ENCODE measurements at regions of chr3 and their contacts with region 1.

Region 1: GRCh38 chr3:52339612-52340011 is 23.5 kb downstream of the DNAH1 start:
- DNase-seq: peak; percentile 22 to 68
- H3K4me3 ChIP-seq: no peak overlapping the region
- H3K27ac ChIP-seq: no peak overlapping the region
- H3K4me1 ChIP-seq: no peaks in the 10 kb centered on the region
- H3K27me3 ChIP-seq: no peaks in the 10 kb centered on the region
- CTCF ChIP-seq: peak; percentile 78

Region 2: DNA sequence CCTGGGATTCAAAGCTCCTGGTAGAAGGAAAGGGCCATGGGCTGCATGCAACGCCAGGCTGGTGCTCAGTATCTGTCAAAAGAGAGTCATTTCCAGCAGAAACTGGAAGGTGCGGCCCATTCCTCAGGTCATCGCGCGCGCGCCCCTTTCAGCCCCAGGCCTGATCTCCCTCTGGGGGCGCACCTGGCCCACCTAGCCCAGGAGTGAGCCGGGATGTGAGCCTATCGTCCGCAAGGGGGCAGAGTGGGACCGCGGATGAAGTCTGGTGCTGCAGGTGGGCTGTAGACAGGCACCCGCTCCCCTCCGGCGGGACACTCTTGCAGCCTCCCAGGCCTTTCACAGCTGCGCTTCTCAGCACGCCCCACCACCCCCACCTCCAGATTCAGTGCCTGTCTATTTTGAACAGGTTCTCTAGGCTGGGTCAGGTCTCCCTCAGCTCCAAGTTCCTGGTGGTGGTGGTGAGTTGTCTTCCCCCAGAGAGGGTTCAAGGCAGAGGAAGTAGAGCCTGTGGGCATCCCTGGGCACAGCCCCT is 338.1 kb before region 1 on chr3:
- CTCF ChIA-PET with region 1: interaction called, 5 read pairs
- POLR2A ChIA-PET with region 1: no interaction called
- intact Hi-C with region 1: loop called (anchors 1 kb)
- DNase-seq: peak in 1 of 2 experiments; percentile 73
- H3K4me3 ChIP-seq: no peak overlapping the region
- H3K27ac ChIP-seq: no peak overlapping the region
- H3K4me1 ChIP-seq: peaks cover 13% of the 10 kb centered on the region
- H3K27me3 ChIP-seq: no peaks in the 10 kb centered on the region
- CTCF ChIP-seq: peak; percentile 92

Region 3: DNA sequence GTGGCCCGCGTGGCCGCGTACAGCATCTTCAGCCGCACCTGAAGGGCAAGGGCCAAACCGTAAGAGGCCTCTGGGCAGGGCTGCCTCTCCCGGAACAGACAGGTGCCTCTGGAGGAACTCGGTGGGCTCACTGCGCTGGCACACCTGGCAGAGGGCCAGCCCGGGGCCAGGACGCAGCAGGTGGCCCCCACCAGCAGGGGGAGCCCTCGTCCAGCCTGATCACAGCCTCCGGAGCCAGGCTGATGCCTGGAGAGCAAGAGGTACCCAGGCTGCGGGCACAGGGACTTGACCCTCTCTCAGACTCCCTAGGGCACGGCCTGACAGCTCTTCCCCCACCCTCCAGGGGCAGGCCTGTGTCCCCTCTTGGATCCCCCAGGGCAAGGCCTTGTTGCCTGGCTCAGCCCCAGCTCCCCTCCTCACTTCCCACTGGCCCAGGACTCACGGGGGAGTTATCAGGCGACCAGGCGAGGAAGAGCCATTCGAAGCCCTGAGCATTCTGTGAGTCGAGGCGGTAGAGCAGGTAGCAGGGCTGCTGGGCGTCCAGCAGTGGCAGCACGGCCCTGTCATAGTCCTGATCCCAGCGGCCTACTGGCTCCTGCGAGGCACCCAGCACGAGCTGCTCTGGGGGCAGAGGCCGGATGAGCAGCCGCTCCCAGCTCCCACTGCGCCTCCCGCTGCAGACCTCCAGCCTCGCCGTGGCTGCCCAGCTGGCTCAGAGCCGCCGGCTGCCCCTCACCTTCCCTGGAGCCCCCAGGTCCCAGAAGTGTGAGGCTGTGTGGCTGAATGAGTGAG is 107.9 kb before region 1 on chr3:
- CTCF ChIA-PET with region 1: no interaction called
- POLR2A ChIA-PET with region 1: no interaction called
- intact Hi-C with region 1: loop called (anchors 1 kb)
- DNase-seq: peak in 1 of 2 experiments; percentile 79
- H3K4me3 ChIP-seq: no peak overlapping the region
- H3K27ac ChIP-seq: no peak overlapping the region
- H3K4me1 ChIP-seq: peaks cover 15% of the 10 kb centered on the region
- H3K27me3 ChIP-seq: no peaks in the 10 kb centered on the region
- CTCF ChIP-seq: peak; percentile 86

Region 4: DNA sequence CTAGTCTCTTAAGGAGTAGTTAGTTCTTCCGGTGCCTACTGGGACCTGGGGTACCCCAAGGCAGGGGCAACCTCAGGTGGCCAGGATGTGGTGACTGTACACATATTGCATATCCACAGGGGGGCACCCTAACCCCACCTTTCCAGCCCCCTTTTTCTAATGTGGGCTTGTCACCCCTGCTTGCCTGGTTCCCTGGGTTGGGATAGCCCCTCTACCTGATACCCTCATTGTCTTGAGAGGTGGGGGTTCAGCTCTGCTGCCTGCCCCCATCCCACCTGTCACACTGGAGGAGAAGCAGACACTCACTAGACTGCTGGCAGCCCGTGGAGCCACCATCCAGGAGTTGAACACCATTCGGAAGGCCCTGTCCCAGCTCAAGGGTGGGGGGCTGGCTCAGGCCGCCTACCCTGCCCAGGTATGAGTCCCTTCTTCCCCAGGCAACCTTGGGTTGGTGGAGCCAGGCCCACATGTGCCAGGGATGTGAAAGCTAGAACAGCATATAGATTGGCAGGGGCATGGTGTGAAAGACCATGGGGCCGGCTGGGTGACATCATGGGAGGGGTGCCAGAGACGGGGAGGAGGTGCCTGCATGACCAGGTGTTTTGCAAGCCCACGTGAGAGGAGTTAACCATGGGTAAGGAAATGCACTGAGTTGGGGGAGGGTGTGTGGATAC is 48.0 kb before region 1 on chr3:
- CTCF ChIA-PET with region 1: interaction called, 17 read pairs
- POLR2A ChIA-PET with region 1: no interaction called
- intact Hi-C with region 1: loop called (anchors 1 kb)
- DNase-seq: peak in 1 of 2 experiments; percentile 21
- H3K4me3 ChIP-seq: no peak overlapping the region
- H3K27ac ChIP-seq: no peak overlapping the region
- H3K4me1 ChIP-seq: peaks cover 7% of the 10 kb centered on the region; the same call in 1 of the 2 replicates
- H3K27me3 ChIP-seq: no peaks in the 10 kb centered on the region
- CTCF ChIP-seq: peak; percentile 64

Region 5: DNA sequence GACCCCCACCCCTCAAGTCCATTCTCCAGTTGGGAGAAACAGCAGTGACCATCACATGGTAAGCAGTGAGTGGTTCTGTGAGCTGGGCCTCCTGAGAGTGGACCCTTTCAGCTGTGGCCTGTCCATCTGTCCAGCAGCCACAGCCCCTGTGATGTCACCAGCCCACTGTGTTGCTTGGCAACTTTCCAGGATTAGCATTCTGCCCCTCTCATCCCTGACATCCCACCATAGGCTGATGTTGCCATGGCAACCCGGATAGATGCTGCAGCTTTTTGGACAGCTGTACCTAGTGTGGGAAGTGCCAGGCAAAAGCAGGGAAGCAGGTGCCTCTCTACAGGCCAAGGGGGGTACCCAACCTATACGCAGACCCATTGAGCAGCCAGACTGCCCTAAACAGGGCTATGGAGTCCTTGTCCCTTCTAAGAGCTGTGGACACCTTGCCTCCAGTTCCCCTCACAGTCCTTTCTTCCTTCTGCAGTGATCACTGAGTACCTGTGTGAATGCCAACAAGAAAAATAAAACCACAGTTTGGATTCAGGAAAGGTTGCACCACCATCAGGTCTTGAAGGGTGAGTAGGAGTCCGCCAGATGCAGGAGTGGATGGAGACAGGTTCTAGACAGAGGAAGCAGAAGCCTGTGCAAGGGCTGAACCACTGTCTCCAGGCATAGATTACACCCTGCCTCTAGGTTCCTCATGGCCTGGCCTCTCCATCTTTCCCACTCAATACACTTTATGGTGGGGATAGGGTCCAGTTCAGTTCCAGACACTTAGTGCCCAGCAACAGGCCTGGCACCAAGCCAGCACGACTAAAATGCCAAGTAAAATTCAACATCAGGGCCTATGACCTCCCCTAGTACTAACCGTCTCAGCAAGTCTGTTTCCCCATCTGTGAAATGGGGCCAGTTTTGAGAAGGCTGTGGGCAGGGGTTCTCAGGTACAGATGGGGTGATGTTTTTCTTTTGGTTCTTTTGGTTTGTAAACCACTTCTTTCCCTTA is 23.3 kb before region 1 on chr3 and contains the start of gene DNAH1:
- CTCF ChIA-PET with region 1: no interaction called
- POLR2A ChIA-PET with region 1: no interaction called
- intact Hi-C with region 1: no loop called
- DNase-seq: no peak
- H3K4me3 ChIP-seq: no peak within 1 kb of the TSS
- H3K27ac ChIP-seq: no peak within 1 kb of the TSS
- H3K4me1 ChIP-seq: peaks cover 26% of the 10 kb centered on the region
- H3K27me3 ChIP-seq: no peaks in the 10 kb centered on the region
- CTCF ChIP-seq: no peak
- total RNA-seq, gene DNAH1: 5.9 and 6.6 TPM in 2 replicates

Measured in PC-9 (cell line).